Endothelial cell of umbilical vein (primary cell): ENCODE measurements at regions of chr2 and their contacts with region 1.

Region 1: DNA sequence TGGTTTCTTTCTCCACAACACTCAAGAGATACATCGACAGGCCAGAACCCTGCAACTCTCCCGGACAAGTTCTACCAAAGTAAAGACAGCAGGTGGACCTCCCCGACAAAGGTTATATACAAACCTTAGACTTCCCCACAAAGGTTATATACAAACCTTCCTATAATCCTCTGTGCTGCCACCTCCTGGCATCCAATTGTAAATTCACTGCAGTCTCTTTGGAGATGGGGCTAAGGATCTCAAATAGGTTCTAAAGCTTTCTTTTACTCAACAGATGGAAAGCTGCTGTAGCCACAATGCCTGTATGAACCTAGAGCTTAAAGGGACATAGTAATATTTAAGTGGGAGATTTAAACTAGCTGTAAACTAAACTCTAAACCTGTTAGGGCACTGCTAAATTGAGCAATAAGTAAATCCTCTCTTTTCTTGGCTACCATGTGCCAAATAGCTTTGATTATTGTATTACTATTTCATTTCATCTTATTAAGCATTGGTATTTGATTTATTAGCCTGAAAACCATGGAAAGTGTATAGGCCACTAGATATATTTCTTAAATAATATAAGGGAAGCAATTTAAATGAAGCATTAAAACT is 9.8 kb upstream of the MREG start:
- DNase-seq: peak; percentile 62
- H3K4me3 ChIP-seq: no peak overlapping the region
- H3K27ac ChIP-seq: no peak overlapping the region
- H3K4me1 ChIP-seq: peaks cover 2% of the 10 kb centered on the region
- H3K27me3 ChIP-seq: no peaks in the 10 kb centered on the region
- CTCF ChIP-seq: peak; percentile 52 to 60
- POLR2A ChIP-seq: no peak

Region 2: DNA sequence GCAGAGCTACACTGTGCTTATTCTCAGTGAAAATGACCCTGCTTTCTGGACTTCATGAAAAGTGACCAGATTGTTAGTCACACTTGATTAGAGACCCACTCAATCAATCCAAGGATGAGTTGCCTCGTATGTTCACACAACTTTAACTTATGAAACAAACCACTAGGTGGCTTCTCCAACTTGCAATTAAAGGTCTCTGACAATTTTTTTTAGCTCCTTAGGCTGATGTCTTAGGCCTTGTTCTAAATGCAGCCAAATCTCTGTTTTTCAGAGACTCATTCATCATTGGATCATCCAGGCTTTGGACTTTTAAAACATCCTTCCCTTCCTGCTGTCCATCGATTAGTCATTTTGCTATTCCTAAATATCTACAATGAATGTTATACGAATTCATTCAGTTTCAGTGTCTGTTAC is 73.2 kb before region 1 on chr2:
- CTCF ChIA-PET with region 1: interaction called, 107 read pairs
- POLR2A ChIA-PET with region 1: no interaction called
- dilution Hi-C with region 1: no loop called
- intact Hi-C with region 1: loop called (anchors 1 kb)
- DNase-seq: peak; percentile 52
- H3K4me3 ChIP-seq: no peak overlapping the region
- H3K27ac ChIP-seq: no peak overlapping the region
- H3K4me1 ChIP-seq: no peaks in the 10 kb centered on the region
- H3K27me3 ChIP-seq: no peaks in the 10 kb centered on the region
- CTCF ChIP-seq: peak; percentile 35 to 50
- POLR2A ChIP-seq: no peak

Region 3: DNA sequence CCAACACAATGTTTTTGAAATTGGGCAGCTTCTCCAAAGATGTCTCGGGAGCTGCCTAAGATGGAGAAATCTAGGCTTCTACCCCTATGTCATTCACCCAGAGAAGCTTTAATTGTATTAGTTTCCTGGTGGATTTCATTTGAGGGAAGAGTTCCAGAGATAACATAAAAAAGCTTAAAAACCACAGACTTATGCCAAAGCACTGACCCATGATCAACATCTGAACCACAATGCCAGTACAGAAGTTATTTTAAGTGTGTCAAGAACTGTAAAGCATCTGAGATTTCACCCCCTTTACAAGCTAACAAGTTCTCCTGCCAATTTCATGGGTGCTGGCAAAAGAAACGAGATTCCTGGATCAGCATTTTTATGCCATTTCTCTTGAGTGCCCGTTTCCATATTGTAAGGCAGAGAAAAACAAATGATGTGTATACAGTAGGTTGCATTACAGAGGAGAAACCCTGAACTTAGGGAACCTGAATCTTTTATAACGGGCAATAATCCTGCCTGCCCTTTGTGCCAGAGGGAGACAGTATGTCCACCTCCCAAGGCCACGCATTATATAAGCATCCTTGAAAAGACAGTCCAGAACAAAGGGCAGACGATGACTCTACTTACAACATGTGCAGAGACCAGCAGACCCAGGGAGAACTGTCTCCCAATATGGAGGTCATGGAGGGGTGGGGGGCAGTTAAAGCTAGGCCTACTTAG is 53.9 kb before region 1 on chr2:
- CTCF ChIA-PET with region 1: interaction called, 13 read pairs
- POLR2A ChIA-PET with region 1: no interaction called
- dilution Hi-C with region 1: no loop called
- intact Hi-C with region 1: no loop called
- DNase-seq: no peak
- H3K4me3 ChIP-seq: no peak overlapping the region
- H3K27ac ChIP-seq: no peak overlapping the region
- H3K4me1 ChIP-seq: no peaks in the 10 kb centered on the region
- H3K27me3 ChIP-seq: no peaks in the 10 kb centered on the region
- CTCF ChIP-seq: no peak
- POLR2A ChIP-seq: no peak

Region 4: DNA sequence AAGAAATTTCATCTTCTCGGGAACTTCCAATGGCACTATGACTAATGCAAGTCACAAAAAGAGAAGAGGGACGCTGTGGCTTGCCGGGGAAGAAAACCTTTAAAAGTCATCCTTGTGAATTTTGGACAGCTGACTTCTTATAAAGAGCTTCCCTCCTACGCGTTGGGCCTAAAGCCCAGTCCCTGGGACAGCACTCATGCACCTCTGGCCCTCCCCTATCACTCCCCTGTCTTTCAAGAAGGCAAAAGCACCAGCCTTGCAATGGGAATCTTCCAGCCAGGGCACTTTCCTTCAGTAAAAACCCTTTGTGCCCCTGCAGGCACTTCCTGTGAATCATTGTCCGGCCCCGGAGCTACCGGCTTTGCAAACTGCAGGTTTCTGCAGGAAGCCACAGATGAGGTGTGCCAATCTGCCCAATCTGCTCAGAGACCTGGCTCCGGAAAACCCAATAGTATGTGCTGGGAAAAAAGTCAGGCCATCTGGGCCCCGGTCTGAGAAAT is 16.9 kb before region 1 on chr2:
- CTCF ChIA-PET with region 1: interaction called, 11 read pairs
- POLR2A ChIA-PET with region 1: no interaction called
- dilution Hi-C with region 1: no loop called
- intact Hi-C with region 1: no loop called
- DNase-seq: peak; percentile 33
- H3K4me3 ChIP-seq: no peak overlapping the region
- H3K27ac ChIP-seq: no peak overlapping the region
- H3K4me1 ChIP-seq: peaks cover 8% of the 10 kb centered on the region
- H3K27me3 ChIP-seq: peaks cover 0 to 2% of the 10 kb centered on the region in 2 experiments
- CTCF ChIP-seq: no peak
- POLR2A ChIP-seq: no peak

Region 5: DNA sequence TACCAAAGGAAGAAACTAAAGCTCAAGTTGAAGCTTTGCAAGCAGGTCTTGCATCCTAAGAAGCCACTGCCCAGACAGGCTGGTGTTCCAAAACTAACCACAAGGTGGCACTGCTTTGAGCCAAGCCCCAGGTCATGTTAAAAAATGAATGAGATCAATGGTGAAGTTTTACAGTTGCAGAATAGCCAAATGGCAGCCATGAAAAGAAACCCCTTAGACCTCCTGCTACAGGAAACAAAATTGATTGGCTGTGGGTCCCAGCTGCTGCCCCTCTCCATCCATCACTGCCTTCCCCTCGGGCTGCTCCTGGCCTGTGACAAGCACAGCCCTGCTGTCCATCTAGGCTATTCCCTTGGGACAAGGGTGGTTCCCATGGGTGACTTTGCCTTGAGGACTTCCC is 10.9 kb after region 1 on chr2:
- CTCF ChIA-PET with region 1: interaction called, 18 read pairs
- POLR2A ChIA-PET with region 1: no interaction called
- dilution Hi-C with region 1: no loop called
- intact Hi-C with region 1: no loop called
- DNase-seq: peak; percentile 77
- H3K4me3 ChIP-seq: no peak overlapping the region
- H3K27ac ChIP-seq: no peak overlapping the region
- H3K4me1 ChIP-seq: no peaks in the 10 kb centered on the region
- H3K27me3 ChIP-seq: no peaks in the 10 kb centered on the region
- CTCF ChIP-seq: peak; percentile 84 to 86
- POLR2A ChIP-seq: no peak

Region 6: GRCh38 chr2:216044883-216045486 is 21.8 kb after region 1 on chr2:
- CTCF ChIA-PET with region 1: interaction called, 13 read pairs
- POLR2A ChIA-PET with region 1: no interaction called
- dilution Hi-C with region 1: no loop called
- intact Hi-C with region 1: no loop called
- DNase-seq: no peak
- H3K4me3 ChIP-seq: no peak overlapping the region
- H3K27ac ChIP-seq: no peak overlapping the region
- H3K4me1 ChIP-seq: no peaks in the 10 kb centered on the region
- H3K27me3 ChIP-seq: no peaks in the 10 kb centered on the region
- CTCF ChIP-seq: no peak
- POLR2A ChIP-seq: no peak